ENCODE measurements at regions of chr16 and their contacts with region 1.

Region 1: DNA sequence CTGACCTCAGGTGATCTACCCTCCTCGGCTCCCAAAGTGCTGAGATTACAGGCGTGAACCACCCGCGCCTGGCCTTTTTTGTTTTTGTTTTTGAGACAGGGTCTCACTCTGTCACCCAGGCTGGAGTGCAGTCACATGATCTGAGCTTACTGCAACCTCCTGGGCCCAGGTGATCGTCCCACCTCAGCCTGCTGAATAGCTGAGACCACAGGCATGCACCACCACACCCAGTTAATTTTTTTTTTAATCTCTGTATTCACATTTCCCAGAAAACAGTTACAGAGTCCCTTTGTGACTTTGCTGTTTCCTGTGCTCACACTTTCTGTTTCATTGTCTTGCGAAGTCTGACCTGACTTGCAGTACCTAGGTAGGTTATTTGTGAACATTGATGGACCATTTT is 2.7 kb downstream of the CLUAP1 start:
- DNase-seq: peak; percentile 75
- H3K4me3 Mint-ChIP-seq: peak overlapping the region; percentile 65
- H3K27ac Mint-ChIP-seq: peak overlapping the region; percentile 84
- H3K4me1 Mint-ChIP-seq: peaks cover 62% of the 10 kb centered on the region
- H3K27me3 Mint-ChIP-seq: no peaks in the 10 kb centered on the region

Region 2: DNA sequence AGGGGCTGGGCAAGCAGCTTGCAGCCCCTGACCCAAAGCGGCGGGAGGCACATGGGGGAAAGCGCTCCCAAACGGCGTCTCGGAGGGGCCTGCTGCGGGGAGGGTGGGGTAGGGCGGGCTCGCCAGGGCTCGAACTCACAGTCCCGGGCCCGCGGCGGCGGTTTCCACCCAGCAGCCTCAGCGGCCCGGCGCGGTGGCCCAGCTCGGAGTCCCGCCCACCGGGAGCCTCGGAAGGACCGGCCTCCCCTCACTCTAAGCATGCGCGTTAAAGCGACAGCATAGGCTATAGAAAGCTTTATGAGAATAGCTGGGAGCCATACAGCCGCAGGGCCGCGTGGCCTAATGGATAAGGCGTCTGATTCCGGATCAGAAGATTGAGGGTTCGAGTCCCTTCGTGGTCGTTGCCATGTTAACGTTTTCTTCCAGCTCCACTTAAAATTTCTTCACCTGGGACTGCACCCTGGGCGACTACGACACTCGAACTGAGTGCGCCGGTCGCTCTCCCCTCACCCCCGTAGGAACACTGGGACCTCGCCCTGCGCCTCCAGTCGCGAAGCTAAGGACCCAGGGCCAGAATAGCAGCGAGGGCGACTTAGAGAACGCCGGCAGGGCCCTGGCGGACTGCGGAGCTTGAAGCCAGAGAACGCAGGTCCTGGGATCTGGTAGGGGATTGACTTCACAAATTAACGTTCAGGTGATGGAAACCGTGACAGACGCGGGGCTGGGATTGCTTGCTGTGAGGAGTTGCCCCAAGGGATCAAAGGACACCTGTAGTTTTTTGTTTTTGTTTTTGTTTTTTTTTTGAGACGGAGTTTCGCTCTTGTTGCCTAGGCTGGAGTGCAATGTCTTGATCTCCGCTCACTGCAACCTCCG is 352.9 kb before region 1 on chr16:
- CTCF ChIA-PET with region 1: interaction called, 4 read pairs
- POLR2A ChIA-PET with region 1: no interaction called
- intact Hi-C with region 1: loop called (anchors 5 kb)
- DNase-seq: peak; percentile 100
- H3K4me3 Mint-ChIP-seq: peak overlapping the region; percentile 84
- H3K27ac Mint-ChIP-seq: peak overlapping the region; percentile 82
- H3K4me1 Mint-ChIP-seq: peaks cover 27% of the 10 kb centered on the region
- H3K27me3 Mint-ChIP-seq: peaks cover 12% of the 10 kb centered on the region

Region 3: DNA sequence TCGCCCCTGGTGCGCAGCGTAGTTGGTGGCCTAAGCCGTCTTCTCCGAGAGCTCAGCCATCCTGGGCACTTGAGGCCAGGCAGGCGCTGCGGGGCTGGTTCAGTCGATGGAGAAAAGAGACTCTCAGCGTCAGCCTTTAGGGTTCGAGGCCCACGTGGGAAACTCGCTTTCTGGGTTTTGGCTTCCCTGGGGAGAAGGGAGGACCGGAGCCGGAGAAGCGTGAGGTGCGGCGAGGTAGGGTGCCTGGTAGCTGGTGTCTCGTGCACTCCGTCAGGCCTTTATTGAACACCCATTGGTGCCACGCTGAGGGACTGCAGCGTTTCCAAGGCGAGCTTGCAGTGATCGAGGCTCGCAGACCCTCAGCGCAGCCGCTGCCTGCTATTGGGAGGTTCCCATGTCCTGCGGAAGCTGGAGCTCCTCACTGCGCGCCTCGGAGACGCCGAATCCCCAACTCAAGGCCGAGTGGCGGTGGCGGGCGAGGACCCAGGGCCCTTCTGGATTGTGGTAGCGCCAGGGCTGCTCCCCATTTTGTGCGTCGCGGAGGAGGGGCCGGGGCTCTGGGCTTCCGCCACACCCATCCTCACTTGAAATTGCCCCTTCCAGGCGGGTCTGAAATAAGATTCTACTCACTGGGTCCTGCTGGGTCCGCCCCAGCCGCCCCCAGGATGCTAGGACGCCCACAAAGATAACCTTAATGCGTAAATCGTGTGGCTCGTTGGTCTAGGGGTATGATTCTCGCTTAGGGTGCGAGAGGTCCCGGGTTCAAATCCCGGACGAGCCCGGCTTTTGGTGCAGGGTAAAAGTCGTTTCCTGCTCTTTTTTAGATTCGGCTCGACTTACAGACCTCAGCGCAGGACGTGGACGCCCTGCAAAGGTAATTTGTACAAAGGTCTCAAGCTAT is 314.3 kb before region 1 on chr16:
- CTCF ChIA-PET with region 1: no interaction called
- POLR2A ChIA-PET with region 1: no interaction called
- intact Hi-C with region 1: loop called (anchors 5 kb)
- DNase-seq: peak; percentile 79
- H3K4me3 Mint-ChIP-seq: peak overlapping the region; percentile 69
- H3K27ac Mint-ChIP-seq: peak overlapping the region; percentile 70
- H3K4me1 Mint-ChIP-seq: peaks cover 46% of the 10 kb centered on the region
- H3K27me3 Mint-ChIP-seq: peaks cover 67% of the 10 kb centered on the region

Region 4: DNA sequence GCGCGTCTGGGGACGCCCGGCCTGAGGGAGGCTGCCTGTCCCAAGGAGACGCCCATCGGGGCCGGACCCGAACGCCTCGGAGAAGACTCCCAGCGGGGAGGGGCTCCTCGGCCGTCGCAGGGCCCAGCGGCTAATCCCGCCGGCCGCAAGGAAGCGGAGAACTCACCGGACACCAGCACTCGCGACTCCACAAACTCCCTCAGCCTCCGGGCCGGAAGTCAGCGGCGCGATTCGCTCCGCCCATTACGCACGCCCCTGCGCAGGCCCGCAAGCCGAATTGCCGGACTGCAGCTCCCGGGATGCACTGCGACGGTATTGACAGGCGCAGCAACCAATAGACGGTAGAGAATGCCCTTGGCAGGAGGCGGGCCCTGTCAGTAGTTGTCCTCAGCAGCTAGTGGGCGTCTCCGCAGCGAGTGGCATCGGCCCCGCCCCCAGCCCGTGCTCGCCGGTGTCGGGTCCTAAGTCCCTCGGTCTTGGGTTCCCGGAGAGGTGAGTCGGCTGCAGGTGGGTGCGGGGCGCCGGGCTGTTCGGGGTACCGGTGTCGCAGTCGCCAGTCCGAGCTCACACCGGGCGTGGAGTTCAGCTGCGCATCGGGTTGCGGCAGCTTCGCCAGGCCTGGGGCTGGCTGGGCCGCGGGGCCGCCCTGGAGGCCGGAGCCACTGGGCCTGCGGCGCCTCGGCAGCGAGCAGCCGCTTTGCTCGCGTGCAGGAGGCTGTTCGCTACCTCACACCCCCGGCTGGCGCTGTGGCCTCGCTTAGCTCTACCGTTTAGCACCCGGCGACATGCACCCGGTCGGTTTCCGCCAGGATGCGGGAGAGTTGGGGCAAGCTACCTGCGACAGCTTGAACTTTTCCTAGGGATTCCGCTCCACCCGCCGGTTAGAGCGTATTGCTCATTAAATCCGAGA is 102.5 kb before region 1 on chr16 and contains the starts of genes ZNF174 and ZSCAN32:
- CTCF ChIA-PET with region 1: interaction called, 14 read pairs
- POLR2A ChIA-PET with region 1: no interaction called
- intact Hi-C with region 1: loop called (anchors 1 kb)
- DNase-seq: peak; percentile 100
- H3K4me3 Mint-ChIP-seq: peak within 1 kb of the TSS; percentile 88
- H3K27ac Mint-ChIP-seq: peak within 1 kb of the TSS; percentile 83
- H3K4me1 Mint-ChIP-seq: peaks cover 52% of the 10 kb centered on the region
- H3K27me3 Mint-ChIP-seq: no peaks in the 10 kb centered on the region
- total RNA-seq, gene ZNF174: 6.0 to 7.3 TPM
- total RNA-seq, gene ZSCAN32: 10.9 to 11.9 TPM

Region 5: GRCh38 chr16:3457434-3458252 is 45.9 kb before region 1 on chr16:
- CTCF ChIA-PET with region 1: interaction called, 4 read pairs
- POLR2A ChIA-PET with region 1: interaction called, 4 read pairs
- intact Hi-C with region 1: loop called (anchors 1 kb)
- DNase-seq: peak; percentile 92
- H3K4me3 Mint-ChIP-seq: peak overlapping the region; percentile 80
- H3K27ac Mint-ChIP-seq: peak overlapping the region; percentile 90
- H3K4me1 Mint-ChIP-seq: peaks cover 41% of the 10 kb centered on the region
- H3K27me3 Mint-ChIP-seq: no peaks in the 10 kb centered on the region

Region 6: DNA sequence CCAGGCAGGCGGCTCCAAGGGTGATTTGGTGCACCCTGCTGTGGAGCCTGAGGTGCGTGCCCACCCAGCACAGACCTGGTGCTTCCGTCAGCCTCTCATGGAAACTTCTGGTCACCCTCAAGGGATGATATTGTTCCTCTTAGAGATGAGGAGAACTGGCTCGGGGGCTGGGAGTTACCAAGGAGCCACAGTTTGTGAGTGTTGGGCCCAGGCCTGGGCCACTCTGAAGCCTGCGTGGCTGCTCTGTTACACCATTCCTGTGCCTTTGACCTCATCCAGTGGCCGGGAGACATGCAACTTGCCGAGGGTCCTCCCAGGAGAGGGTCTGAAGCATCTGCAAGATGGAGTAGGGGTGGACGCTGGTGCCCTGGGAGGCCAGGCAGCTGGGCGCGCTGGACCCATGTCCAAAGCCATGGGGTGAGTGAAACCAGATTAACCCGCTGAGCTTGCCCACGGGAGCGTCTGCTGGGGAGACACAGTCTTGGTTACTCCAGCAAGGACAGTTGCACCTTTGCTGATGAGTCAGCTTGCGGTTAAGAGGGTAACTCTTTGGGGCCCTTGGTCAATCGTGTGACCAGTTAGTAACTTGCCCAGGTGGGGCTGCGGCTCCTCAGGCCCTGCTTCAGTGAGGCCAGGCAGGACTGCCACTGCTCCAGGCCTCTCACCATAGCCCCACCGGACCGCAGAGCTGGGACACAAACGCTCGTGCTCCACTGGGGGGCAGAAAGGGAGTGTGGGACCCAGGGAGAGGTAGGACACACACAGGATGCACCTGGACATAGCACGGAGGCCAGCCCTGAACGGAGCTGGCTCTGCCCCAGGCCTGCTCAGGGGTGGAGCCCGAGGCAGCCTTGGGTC is 15.8 kb before region 1 on chr16:
- CTCF ChIA-PET with region 1: no interaction called
- POLR2A ChIA-PET with region 1: no interaction called
- intact Hi-C with region 1: no loop called
- DNase-seq: no peak
- H3K4me3 Mint-ChIP-seq: no peak overlapping the region
- H3K27ac Mint-ChIP-seq: no peak overlapping the region
- H3K4me1 Mint-ChIP-seq: no peaks in the 10 kb centered on the region
- H3K27me3 Mint-ChIP-seq: no peaks in the 10 kb centered on the region